CD8-positive, alpha-beta T cell (primary cell): ENCODE measurements at regions of chr1 and their contacts with region 1.

Region 1: GRCh38 chr1:206872139-206872538 is 6.7 kb downstream of the IL20 start:
- DNase-seq: no peak
- ATAC-seq: no peak
- H3K4me3 ChIP-seq: no peak overlapping the region
- H3K4me3 Mint-ChIP-seq: no peak overlapping the region
- H3K27ac ChIP-seq: no peak overlapping the region
- H3K27ac Mint-ChIP-seq: no peak overlapping the region
- H3K4me1 ChIP-seq: no peaks in the 10 kb centered on the region
- H3K4me1 Mint-ChIP-seq: no peaks in the 10 kb centered on the region
- H3K27me3 ChIP-seq: no peaks in the 10 kb centered on the region
- H3K27me3 Mint-ChIP-seq: no peaks in the 10 kb centered on the region
- CTCF ChIP-seq: no peak

Region 2: DNA sequence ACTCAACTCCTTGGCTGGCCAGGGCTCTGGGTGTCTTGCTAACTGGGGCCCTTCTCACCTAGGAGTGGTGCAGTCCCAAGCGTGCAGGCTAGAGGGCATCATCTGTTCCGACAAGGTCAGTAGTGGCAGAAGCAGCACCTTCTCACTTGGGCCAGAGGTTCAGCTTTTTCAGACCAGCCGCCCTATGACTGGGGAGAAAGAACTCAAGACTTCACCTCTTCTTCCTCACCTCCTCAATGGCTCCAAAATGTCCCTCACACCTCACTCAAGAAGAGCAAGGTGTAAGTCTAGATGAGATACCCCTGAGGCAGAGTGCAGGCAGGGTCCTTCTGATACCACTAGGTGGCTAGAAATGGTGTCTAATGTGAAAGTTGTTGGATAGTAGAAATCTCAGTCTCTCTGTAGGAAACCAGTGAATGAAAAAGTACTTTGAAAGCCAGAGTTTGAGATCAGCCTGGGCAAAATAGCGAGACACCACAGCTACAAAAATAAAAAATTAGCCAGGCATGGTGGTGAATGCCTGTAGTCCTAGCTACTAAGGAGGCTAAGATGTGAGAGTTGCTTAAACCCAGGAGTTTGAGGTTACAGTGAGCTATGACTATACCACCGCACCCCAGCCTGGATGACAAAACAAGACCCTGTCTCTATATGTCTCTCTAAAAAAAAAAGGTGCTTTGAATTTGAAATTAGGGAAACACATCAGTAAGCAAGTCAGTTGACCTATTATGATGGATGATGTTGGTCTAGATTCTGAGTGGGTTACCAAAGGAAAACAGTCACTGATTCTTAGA is 15.3 kb before region 1 on chr1:
- CTCF ChIA-PET with region 1: interaction called, 15 read pairs
- POLR2A ChIA-PET with region 1: interaction called, 3 read pairs
- intact Hi-C with region 1: no loop called
- DNase-seq: peak in 4 of 9 experiments; percentile 16 to 53 (median 28)
- ATAC-seq: peak; percentile 55
- H3K4me3 ChIP-seq: no peak overlapping the region
- H3K4me3 Mint-ChIP-seq: no peak overlapping the region
- H3K27ac ChIP-seq: no peak overlapping the region
- H3K27ac Mint-ChIP-seq: no peak overlapping the region
- H3K4me1 ChIP-seq: peaks cover 4% of the 10 kb centered on the region
- H3K4me1 Mint-ChIP-seq: peaks cover 13% of the 10 kb centered on the region
- H3K27me3 ChIP-seq: no peaks in the 10 kb centered on the region
- H3K27me3 Mint-ChIP-seq: no peaks in the 10 kb centered on the region
- CTCF ChIP-seq: peak; percentile 33

Region 3: DNA sequence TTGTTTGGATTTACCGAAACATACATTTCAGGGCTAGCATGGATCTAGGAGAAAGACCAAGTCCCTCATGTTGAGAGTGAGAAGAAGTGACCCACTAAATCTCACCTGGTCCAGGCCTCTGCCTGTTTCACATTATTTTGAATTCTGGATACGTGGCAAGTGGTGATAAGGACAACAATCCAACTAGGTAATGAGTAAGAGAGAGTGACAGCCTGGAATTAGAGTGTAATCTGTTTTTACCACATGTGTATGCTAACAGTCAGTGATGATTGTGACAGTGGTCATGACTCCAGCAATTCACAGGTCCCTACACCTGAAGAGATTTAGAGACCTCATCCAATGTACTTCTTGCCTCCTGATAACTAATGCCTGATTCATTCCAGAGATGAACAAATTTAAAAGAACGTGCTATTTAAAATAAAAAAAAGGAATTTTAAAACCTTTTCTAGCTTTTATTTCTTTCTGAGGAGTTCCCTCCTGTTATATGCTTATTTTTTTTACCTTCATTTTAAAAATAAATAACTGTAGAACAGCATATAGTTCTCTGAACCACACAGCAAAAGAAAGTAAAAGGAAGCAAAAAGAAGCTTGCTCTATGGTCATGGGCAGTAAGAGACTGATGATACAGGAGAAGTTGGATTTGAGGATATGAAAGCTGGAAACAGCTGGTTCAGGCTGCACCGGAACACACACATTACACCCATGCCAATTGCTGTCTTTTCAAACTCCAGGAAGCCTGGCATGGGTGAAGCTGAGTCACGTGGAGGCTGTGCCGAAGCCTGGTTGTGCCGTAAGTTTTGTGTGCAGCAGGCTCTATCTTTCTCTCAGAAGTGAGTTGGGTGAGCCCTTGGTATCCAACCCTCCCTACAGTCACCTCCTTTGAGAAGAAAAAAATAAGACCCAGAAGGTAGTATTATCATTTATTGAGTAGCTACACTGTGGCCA is 145.7 kb after region 1 on chr1:
- CTCF ChIA-PET with region 1: no interaction called
- POLR2A ChIA-PET with region 1: no interaction called
- intact Hi-C with region 1: no loop called
- DNase-seq: no peak
- ATAC-seq: no peak
- H3K4me3 ChIP-seq: no peak overlapping the region
- H3K4me3 Mint-ChIP-seq: no peak overlapping the region
- H3K27ac ChIP-seq: no peak overlapping the region
- H3K27ac Mint-ChIP-seq: no peak overlapping the region
- H3K4me1 ChIP-seq: no peaks in the 10 kb centered on the region
- H3K4me1 Mint-ChIP-seq: no peaks in the 10 kb centered on the region
- H3K27me3 ChIP-seq: no peaks in the 10 kb centered on the region
- H3K27me3 Mint-ChIP-seq: peaks cover 17% of the 10 kb centered on the region
- CTCF ChIP-seq: no peak